ENCODE measurements at regions of chr4 and their contacts with region 1.

Region 1: GRCh38 chr4:76515975-76516843 is 81.2 kb downstream of the SHROOM3 start:
- DNase-seq: peak; percentile 41
- ATAC-seq: peak; percentile 84
- H3K4me3 ChIP-seq: no peak overlapping the region
- H3K27ac ChIP-seq: no peak overlapping the region
- H3K4me1 ChIP-seq: peaks cover 7% of the 10 kb centered on the region; the same call in 1 of the 2 replicates
- H3K27me3 ChIP-seq: no peaks in the 10 kb centered on the region; a peak in 1 of 4 replicates
- CTCF ChIP-seq: no peak
- EP300 ChIP-seq: peak in 1 of 2 experiments; percentile 53; a peak in 1 of 4 replicates
- POLR2A ChIP-seq: no peak
- RAD21 ChIP-seq: no peak

Region 2: DNA sequence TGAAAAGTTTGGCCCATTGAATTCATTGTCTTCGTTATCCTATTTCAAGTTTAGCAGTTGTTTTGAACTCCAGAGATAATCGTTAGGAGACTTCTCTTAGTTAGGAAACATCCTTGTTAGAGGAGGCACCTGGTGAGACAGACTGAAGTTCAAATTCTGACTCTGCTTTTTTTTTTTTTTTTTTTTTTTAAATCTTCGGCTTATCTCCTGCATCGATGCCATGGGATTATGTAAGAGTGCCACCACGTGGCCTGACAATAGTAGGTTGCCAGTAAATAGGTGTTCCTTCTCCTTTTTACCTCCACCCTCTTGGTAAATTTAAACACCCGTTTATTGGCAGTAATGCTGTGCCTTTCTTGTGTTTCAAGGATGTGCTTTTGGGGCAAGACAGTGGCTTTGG is 232.4 kb after region 1 on chr4:
- CTCF ChIA-PET with region 1: no interaction called
- POLR2A ChIA-PET with region 1: no interaction called
- RAD21 ChIA-PET with region 1: no interaction called
- SMC1A ChIA-PET with region 1: no interaction called
- in situ Hi-C with region 1: loop called (anchors 5 kb)
- intact Hi-C with region 1: loop called (anchors 1 kb)
- DNase-seq: no peak
- ATAC-seq: peak; percentile 73
- H3K4me3 ChIP-seq: no peak overlapping the region
- H3K27ac ChIP-seq: no peak overlapping the region
- H3K4me1 ChIP-seq: no peaks in the 10 kb centered on the region
- H3K27me3 ChIP-seq: no peaks in the 10 kb centered on the region
- CTCF ChIP-seq: peak; percentile 34 to 57 (median 54); a peak in 5 of 6 replicates
- EP300 ChIP-seq: no peak
- POLR2A ChIP-seq: no peak
- RAD21 ChIP-seq: peak; percentile 85

Measured in GM12878 (cell line).